Head of caudate nucleus (tissue), 42 donors: ENCODE measurements at regions of chr1 and their contacts with region 1.

Region 1: GRCh38 chr1:224513787-224514209 is 79.2 kb upstream of the WDR26 start:
- DNase-seq: peak; percentile 73 to 95 (median 88)

Region 2: DNA sequence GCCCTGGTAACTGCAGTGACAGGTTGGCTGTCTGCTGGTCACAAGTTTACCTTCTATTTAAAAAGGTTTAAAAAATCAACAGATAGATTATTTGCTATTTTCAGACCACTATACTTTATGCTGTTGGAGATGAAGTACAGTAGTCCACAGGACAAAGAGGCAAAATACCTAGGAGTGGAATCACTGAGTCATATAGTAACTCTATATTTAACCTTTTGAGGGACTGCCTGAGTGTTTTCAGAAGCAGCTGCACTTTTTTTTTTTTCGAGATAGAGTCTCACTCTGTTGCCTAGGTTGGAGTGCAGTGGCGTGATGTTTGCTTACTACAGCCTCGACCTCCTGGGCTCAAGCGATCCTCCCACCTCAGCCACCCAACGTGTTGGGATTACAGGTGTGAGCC is 145.4 kb before region 1 on chr1:
- intact Hi-C with region 1: no loop called
- DNase-seq: no peak

Region 3: GRCh38 chr1:224774378-224774777 is 260.6 kb after region 1 on chr1:
- intact Hi-C with region 1: no loop called
- DNase-seq: no peak

Region 4: GRCh38 chr1:224851210-224851847 is 337.5 kb after region 1 on chr1:
- intact Hi-C with region 1: loop called (anchors 2 kb)
- DNase-seq: peak in 41 of 42 donors; percentile 30 to 87 (median 69)

Region 5: DNA sequence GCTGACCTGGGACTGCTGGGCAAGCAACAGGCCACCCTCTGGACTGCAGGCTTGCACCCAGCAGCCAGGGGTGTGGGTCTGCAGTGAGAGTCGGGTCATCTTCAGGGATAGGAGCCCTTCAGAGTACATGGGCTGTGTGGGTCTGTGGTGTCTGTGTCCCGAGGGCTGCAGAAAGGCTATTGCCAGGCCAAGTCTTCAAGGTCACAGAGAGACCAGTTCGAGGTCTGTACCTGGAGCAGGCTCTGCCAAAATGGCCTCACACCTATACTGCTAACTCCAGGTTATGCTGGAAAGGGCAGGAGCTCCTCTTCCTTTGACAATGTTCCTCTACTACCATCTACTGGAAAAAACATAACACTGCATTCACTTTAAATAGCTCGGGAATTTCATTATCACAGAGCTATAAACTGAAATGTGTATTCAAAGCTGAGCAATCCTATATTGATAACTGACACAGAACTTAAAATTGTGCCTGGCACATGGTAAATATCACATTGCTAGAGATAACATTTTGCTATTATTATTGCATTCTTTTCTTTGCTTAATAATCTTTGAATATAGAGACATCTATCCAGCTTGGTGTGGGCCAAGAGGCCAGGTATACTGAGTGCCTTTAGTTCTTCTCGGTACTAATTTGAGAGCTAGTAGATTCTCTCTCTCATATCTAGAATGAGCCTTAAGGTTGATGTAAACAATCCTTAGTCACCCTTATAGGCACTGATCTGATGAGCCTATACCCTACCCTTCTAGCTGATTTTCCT is 408.8 kb after region 1 on chr1:
- intact Hi-C with region 1: loop called (anchors 5 kb)
- DNase-seq: peak in 3 of 42 donors; percentile 2 to 6 (median 3)